Activated CD4-positive, alpha-beta memory T cell treated with anti-CD3 and anti-CD28 coated beads, Interleukin-2, amount 10 ng/mL, durations not matched to agents 7 days and 5 days (primary cell): ENCODE measurements at regions of chr1 and their contacts with region 1.

Region 1: GRCh38 chr1:167599957-167600581 is 30.0 kb upstream of the RCSD1 start:
- DNase-seq: peak; percentile 51
- H3K4me3 Mint-ChIP-seq: peak overlapping the region; percentile 40
- H3K27ac Mint-ChIP-seq: peak overlapping the region; percentile 36
- H3K4me1 Mint-ChIP-seq: peaks cover 42% of the 10 kb centered on the region
- H3K27me3 Mint-ChIP-seq: no peaks in the 10 kb centered on the region

Region 2: DNA sequence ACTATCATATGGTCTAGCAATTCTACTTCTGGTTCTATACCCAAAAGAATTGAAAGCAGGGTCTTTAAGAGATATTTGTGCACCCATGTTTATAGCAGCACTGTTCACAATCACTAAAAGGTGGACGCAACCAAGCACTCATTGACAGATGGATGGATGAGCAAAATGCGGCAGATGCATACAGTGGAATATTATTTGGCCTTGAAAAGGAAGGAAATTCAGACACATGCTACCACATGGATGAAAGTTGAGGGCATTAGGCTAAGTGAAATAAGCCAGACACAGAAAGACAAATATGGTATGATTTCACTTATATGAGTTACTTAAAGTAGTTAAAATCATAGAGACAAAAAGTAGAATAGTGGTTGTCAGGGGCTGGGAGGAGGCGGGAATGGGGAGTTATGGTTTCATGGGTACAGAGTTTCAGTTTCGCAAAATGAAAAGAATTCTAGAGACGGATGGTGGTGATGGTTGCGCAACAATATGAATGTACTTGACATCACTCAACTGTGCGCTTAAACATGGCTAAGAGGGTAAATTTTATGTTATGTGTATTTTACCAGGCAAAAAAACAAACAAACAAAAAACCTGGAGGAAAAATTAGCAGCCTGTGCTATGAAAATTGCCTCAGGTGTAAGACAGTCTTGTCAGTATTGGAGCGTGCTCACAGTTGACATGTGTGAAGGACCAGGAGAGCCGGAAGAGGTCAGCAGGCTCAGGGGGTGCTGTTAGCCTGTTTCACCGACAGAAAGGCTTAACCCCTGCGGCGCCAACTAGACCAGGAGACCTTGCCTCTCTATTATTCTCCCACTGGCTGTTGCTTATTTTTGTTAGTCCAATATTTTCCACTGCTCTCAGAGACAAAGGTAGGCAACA is 108.2 kb before region 1 on chr1:
- CTCF ChIA-PET with region 1: no interaction called
- POLR2A ChIA-PET with region 1: no interaction called
- DNase-seq: peak; percentile 53
- H3K4me3 Mint-ChIP-seq: peak overlapping the region; percentile 56
- H3K27ac Mint-ChIP-seq: peak overlapping the region; percentile 84
- H3K4me1 Mint-ChIP-seq: peaks cover 94% of the 10 kb centered on the region
- H3K27me3 Mint-ChIP-seq: no peaks in the 10 kb centered on the region

Region 3: DNA sequence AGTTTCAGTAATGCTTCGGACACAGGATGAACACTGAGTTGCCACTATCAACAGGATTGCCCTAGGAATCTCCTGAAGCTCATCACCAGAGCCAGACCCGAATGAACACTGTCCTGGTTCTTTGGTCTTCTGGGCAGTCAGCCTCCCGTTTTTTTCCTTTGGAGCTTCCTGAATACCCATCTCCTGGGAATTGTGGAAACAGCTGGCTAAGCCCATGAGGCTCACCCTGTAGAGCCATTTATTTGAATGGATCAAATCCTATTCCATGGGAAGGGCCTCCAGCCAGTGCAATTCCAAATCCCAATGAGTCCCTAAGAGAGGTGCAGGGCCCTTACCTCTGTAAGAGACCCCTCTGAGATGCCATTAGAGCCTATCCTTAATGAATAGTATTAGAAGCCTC is 35.9 kb after region 1 on chr1:
- CTCF ChIA-PET with region 1: interaction called, 84 read pairs
- POLR2A ChIA-PET with region 1: interaction called, 189 read pairs
- DNase-seq: no peak
- H3K4me3 Mint-ChIP-seq: no peak overlapping the region
- H3K27ac Mint-ChIP-seq: peak overlapping the region; percentile 80
- H3K4me1 Mint-ChIP-seq: peaks cover 86% of the 10 kb centered on the region
- H3K27me3 Mint-ChIP-seq: no peaks in the 10 kb centered on the region

Region 4: DNA sequence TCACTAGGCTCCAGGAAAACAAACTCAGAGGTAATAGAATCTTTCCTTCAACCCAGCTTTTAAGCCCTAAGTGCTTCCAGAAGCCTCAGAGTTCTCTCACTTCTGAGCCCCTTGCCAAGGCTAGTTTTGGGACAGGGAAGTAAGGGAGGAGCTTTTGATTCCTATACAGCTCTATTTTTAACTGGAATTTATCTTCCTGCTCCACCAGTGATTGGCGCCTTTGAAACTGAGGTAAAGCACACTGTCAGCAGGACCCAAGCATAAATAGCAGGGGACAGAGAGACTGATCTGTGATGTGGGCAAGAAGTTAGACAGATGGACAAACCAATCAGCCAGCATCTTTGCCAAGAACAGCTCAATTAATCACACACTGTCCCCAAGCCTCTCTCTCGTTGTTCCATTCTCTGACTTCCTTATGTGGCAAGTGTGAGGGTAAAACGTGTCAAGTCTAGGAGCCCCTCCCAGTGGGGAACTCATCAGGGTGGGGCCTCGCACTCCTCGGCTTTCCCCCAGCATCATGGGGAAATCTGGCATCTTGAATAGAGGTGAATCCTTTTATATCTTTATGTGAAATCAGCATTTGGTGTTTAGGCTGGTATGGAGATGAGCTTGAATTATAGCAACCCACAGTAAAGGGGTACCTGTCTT is 81.5 kb after region 1 on chr1:
- CTCF ChIA-PET with region 1: interaction called, 166 read pairs
- POLR2A ChIA-PET with region 1: interaction called, 28 read pairs
- DNase-seq: no peak
- H3K4me3 Mint-ChIP-seq: no peak overlapping the region
- H3K27ac Mint-ChIP-seq: peak overlapping the region; percentile 29
- H3K4me1 Mint-ChIP-seq: peaks cover 6% of the 10 kb centered on the region
- H3K27me3 Mint-ChIP-seq: no peaks in the 10 kb centered on the region

Region 5: GRCh38 chr1:167695147-167695546 is 95.1 kb after region 1 on chr1:
- CTCF ChIA-PET with region 1: interaction called, 16 read pairs
- POLR2A ChIA-PET with region 1: interaction called, 3 read pairs
- DNase-seq: no peak
- H3K4me3 Mint-ChIP-seq: no peak overlapping the region
- H3K27ac Mint-ChIP-seq: no peak overlapping the region
- H3K4me1 Mint-ChIP-seq: no peaks in the 10 kb centered on the region
- H3K27me3 Mint-ChIP-seq: no peaks in the 10 kb centered on the region